A549 (cell line): ENCODE measurements at regions of chr11 and their contacts with region 1.

Region 1: GRCh38 chr11:76799066-76799804 is 16.1 kb downstream of the TSKU start:
- DNase-seq: peak; percentile 83 to 89
- ATAC-seq: peak; percentile 36 to 69
- H3K4me3 ChIP-seq: peak overlapping the region; percentile 11; the same call in 2 of the 3 replicates
- H3K27ac ChIP-seq: peak overlapping the region; percentile 85 to 98
- H3K4me1 ChIP-seq: peaks cover 100% of the 10 kb centered on the region
- CTCF ChIP-seq: peak; percentile 83
- EP300 ChIP-seq: peak in 1 of 2 experiments; percentile 46; a peak in 2 of 5 replicates
- POLR2A ChIP-seq: no peak
- RAD21 ChIP-seq: peak; percentile 71 to 90

Region 2: DNA sequence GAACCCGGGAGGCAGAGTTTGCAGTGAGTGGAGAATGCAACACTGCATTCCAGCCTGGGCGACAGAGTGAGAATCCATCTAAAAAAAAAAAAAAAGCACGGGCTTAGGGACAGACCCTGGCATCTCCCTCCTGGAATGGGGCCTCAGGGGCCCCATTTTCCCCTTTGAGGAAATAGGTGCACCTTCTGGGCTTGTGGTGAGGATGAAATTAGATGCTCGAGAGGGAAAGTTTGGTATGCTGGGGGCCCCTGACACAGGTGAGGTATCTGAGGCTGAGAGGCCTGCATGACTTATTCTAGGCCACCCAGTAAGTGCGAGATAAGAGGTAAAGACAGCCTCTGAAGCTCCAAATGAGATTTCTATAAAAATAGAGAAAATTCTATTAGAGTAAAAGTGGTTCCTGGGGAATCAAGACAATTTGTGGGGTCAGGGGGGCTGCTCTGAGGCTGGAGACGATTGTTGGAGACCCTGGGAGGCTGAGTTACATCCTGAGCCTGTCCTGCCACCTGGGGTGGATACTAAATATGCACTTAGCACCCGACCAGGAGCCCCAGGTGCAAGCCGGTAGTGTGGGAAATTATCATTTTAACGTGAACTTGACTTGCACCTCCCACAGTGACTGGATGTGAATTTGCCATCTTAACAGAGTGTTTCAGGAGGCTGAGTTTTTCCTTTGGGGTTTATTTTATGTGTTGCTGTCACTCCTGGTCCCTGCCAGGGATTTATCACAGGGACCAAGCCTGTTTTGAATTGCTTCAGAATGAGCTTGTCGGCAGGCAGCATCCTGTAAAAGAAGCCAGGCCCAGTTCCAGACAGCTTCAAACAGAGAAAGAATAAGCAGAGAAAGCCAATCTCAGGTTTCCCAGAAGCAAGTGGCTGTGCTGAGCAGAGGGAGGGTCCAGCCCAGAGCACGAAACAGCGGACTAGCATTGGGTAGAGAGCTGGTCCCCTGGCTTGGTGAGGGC is 64.5 kb before region 1 on chr11:
- CTCF ChIA-PET with region 1: interaction called, 207 read pairs
- POLR2A ChIA-PET with region 1: interaction called, 3 read pairs
- DNase-seq: no peak
- ATAC-seq: peak in 1 of 2 experiments; percentile 6; a peak in 2 of 6 replicates
- H3K4me3 ChIP-seq: no peak overlapping the region
- H3K27ac ChIP-seq: peak overlapping the region; percentile 77 to 79
- H3K4me1 ChIP-seq: peaks cover 24% of the 10 kb centered on the region
- CTCF ChIP-seq: no peak
- EP300 ChIP-seq: no peak
- POLR2A ChIP-seq: no peak
- RAD21 ChIP-seq: no peak

Region 3: GRCh38 chr11:76762867-76763572 is 36.2 kb before region 1 on chr11:
- CTCF ChIA-PET with region 1: interaction called, 20 read pairs
- POLR2A ChIA-PET with region 1: interaction called, 4 read pairs
- DNase-seq: no peak
- ATAC-seq: peak in 1 of 2 experiments; percentile 46; a peak in 4 of 6 replicates
- H3K4me3 ChIP-seq: no peak overlapping the region
- H3K27ac ChIP-seq: peak overlapping the region; percentile 97 to 100
- H3K4me1 ChIP-seq: peaks cover 75% of the 10 kb centered on the region
- CTCF ChIP-seq: peak; percentile 16; the same call in 1 of the 3 replicates
- EP300 ChIP-seq: no peak
- POLR2A ChIP-seq: no peak
- RAD21 ChIP-seq: peak; percentile 49 to 51; a peak in 4 of 5 replicates

Region 4: GRCh38 chr11:76773921-76774361 is 25.3 kb before region 1 on chr11:
- CTCF ChIA-PET with region 1: interaction called, 27 read pairs
- POLR2A ChIA-PET with region 1: interaction called, 25 read pairs
- DNase-seq: no peak
- ATAC-seq: no peak
- H3K4me3 ChIP-seq: no peak overlapping the region
- H3K27ac ChIP-seq: peak overlapping the region; percentile 97 to 100
- H3K4me1 ChIP-seq: peaks cover 48% of the 10 kb centered on the region
- CTCF ChIP-seq: no peak
- EP300 ChIP-seq: no peak
- POLR2A ChIP-seq: no peak
- RAD21 ChIP-seq: no peak